ENCODE measurements at regions of chr5 and their contacts with region 1.

Region 1: GRCh38 chr5:124007675-124008398 is 495.9 kb downstream of the CSNK1G3 start:
- DNase-seq: no peak
- ATAC-seq: no peak
- H3K4me3 Mint-ChIP-seq: no peak overlapping the region
- H3K27ac Mint-ChIP-seq: no peak overlapping the region
- H3K4me1 Mint-ChIP-seq: no peaks in the 10 kb centered on the region
- H3K27me3 Mint-ChIP-seq: no peaks in the 10 kb centered on the region

Region 2: DNA sequence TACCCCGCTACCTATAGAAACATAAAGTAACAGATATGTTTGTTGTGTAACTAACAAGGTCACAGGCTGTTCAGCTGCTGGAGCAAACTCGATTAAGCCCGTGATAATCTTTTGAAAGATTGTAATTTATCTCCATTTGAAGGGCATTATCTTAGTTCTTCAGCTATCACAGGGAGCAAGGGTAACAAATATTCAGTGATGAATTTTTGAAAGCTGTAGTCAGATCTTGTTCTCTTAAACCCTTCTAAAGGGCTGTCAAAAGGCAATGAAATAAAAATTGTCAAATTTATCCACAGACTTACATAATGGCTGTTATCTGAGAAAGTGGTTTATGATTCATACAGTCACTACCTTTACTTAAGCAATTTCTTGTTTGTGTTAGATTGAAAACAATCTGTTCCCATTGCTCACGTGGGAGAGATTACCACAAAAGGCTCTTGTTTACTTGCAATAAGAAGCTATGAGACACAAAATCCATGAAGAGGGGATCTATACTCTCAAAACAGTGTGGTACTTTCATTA is 816.9 kb after region 1 on chr5:
- CTCF ChIA-PET with region 1: no interaction called
- POLR2A ChIA-PET with region 1: no interaction called
- intact Hi-C with region 1: loop called in 1 of 2 experiments (anchors 10 kb)
- DNase-seq: no peak
- ATAC-seq: no peak
- H3K4me3 Mint-ChIP-seq: no peak overlapping the region
- H3K27ac Mint-ChIP-seq: no peak overlapping the region
- H3K4me1 Mint-ChIP-seq: no peaks in the 10 kb centered on the region
- H3K27me3 Mint-ChIP-seq: no peaks in the 10 kb centered on the region

Measured in activated CD4-positive, alpha-beta T cell treated with anti-CD3 and anti-CD28 coated beads for 36 hours (primary cell).